Activated CD4-positive, alpha-beta memory T cell treated with anti-CD3 and anti-CD28 coated beads for 36 hours (primary cell): ENCODE measurements at regions of chr10 and their contacts with region 1.

Region 1: GRCh38 chr10:75137533-75138438 is 26.3 kb downstream of the SAMD8 start:
- DNase-seq: peak; percentile 63
- H3K4me3 Mint-ChIP-seq: no peak overlapping the region
- H3K27ac Mint-ChIP-seq: peak overlapping the region; percentile 73
- H3K4me1 Mint-ChIP-seq: peaks cover 33% of the 10 kb centered on the region
- H3K27me3 Mint-ChIP-seq: no peaks in the 10 kb centered on the region

Region 2: GRCh38 chr10:75165684-75166622 is 28.2 kb after region 1 on chr10:
- CTCF ChIA-PET with region 1: no interaction called
- POLR2A ChIA-PET with region 1: no interaction called
- intact Hi-C with region 1: loop called (anchors 2 kb)
- DNase-seq: no peak
- H3K4me3 Mint-ChIP-seq: no peak overlapping the region
- H3K27ac Mint-ChIP-seq: peak overlapping the region; percentile 84
- H3K4me1 Mint-ChIP-seq: peaks cover 36% of the 10 kb centered on the region
- H3K27me3 Mint-ChIP-seq: no peaks in the 10 kb centered on the region

Region 3: DNA sequence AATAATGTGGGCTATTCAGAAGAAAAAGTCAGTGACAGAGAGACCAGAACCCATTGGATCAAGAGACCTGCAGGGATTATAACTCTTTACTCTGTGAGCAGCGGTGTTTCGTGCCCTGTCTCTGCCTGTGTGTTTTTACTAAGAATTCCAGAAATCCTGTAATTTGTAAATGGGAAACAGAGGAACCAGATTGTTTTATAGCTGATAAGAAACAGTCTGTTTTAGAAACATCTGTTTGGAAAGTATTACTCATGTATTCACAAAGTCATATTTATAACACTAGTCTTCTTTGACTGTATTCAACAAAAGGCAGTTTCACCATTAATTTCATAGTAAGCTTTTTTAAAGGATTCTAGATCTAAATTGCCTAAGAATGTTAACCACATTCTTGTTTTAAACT is 42.8 kb after region 1 on chr10:
- CTCF ChIA-PET with region 1: no interaction called
- POLR2A ChIA-PET with region 1: no interaction called
- intact Hi-C with region 1: loop called (anchors 1 kb)
- DNase-seq: no peak
- H3K4me3 Mint-ChIP-seq: no peak overlapping the region
- H3K27ac Mint-ChIP-seq: peak overlapping the region; percentile 49
- H3K4me1 Mint-ChIP-seq: peaks cover 30% of the 10 kb centered on the region
- H3K27me3 Mint-ChIP-seq: no peaks in the 10 kb centered on the region